PC-3 (cell line): ENCODE measurements at regions of chr1 and their contacts with region 1.

Region 1: GRCh38 chr1:172708452-172708851 is 49.5 kb downstream of the FASLG start:
- DNase-seq: no peak
- ATAC-seq: peak; percentile 31; the same call in 1 of the 2 replicates
- H3K4me3 ChIP-seq: no peak overlapping the region
- H3K27ac ChIP-seq: no peak overlapping the region
- H3K4me1 ChIP-seq: no peaks in the 10 kb centered on the region
- H3K27me3 ChIP-seq: no peaks in the 10 kb centered on the region
- CTCF ChIP-seq: no peak

Region 2: DNA sequence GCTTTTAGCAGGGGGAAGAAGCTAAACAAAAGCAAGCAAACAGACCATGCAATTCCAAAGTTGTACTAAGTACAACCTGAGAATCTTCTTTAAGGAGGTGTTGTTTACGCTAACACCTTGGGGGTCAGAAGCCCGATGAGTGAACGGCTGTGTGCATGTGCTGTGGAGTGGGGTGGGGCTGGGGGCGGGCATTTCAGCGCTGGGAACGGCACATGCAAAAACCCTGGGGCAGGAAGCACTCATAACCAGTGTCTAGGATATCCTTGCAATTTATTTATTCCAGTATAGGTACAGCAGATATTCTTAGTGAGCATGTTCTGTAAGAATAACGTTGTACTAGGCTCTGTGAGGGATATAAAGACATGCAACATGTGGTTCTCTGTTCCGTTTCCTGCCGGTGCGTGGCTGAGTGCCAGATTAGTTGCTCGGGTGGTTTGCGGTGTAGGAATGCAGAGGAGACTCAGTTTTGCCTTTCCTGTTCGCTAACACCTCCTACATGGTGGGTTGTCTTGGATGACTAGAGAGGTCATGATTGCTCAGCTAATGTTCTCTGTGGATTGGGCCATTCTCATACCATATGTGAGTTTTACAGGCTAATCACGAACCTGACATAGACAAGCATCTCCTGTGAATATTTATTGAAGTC is 45.9 kb before region 1 on chr1:
- CTCF ChIA-PET with region 1: no interaction called
- POLR2A ChIA-PET with region 1: no interaction called
- intact Hi-C with region 1: loop called (anchors 5 kb)
- DNase-seq: peak; percentile 37
- ATAC-seq: no peak; the same call in 1 of the 2 replicates
- H3K4me3 ChIP-seq: no peak overlapping the region
- H3K27ac ChIP-seq: no peak overlapping the region
- H3K4me1 ChIP-seq: peaks cover 6% of the 10 kb centered on the region
- H3K27me3 ChIP-seq: no peaks in the 10 kb centered on the region
- CTCF ChIP-seq: no peak

Region 3: DNA sequence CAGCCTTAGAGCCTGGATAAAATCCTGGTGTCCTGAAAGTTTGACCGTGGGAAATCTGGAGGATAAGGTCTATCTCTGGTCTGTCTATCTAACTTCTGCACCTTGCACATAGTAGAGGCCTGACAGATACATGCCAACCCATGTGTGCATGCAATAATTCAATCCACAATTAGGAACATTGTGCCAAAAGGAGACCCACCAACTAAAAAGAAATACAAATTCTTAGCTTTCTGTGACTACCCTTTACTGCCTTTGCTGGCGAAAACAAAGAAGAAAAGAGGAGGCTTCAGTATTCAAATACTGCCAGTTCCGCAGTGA is 1005.9 kb after region 1 on chr1:
- CTCF ChIA-PET with region 1: no interaction called
- POLR2A ChIA-PET with region 1: no interaction called
- intact Hi-C with region 1: no loop called
- DNase-seq: no peak
- ATAC-seq: no peak
- H3K4me3 ChIP-seq: peak overlapping the region; percentile 72
- H3K27ac ChIP-seq: peak overlapping the region; percentile 2; the same call in 1 of the 2 replicates
- H3K4me1 ChIP-seq: peaks cover 20% of the 10 kb centered on the region
- H3K27me3 ChIP-seq: no peaks in the 10 kb centered on the region
- CTCF ChIP-seq: no peak